Natural killer cell (primary cell): ENCODE measurements at regions of chr5 and their contacts with region 1.

Region 1: DNA sequence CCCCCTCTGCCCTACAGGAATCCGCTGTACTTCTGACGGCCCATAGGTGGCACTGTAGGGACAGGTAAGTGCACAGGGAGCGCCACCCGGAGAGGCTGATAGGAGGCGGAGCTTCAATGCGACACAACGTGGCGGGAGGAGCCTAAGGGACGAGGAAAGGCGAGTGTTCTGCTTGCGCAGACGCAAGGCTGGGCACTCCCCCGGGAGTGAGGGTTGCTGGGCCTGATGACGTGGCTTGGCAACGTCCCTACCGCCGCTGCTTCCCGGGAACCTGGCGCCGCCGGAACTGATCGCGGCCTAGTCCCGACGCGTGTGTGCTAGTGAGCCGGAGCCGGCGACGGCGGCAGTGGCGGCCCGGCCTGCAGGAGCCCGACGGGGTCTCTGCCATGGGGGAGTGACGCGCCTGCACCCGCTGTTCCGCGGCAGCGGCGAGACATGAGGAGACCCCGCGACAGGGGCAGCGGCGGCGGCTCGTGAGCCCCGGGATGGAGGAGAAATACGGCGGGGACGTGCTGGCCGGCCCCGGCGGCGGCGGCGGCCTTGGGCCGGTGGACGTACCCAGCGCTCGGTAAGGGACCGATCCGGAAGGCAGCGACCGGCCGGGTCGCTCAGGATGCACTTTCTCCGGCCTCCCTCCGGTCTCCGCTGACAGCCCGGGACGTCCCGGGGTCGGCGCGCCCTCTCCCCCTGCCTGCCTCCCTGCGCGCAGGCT is at the start of gene SLC30A5:
- DNase-seq: peak; percentile 94 to 100
- ATAC-seq: peak; percentile 97 to 100 (median 98)
- H3K4me3 ChIP-seq: peak within 1 kb of the TSS; percentile 48
- H3K4me3 Mint-ChIP-seq: peak within 1 kb of the TSS; percentile 95
- H3K27ac ChIP-seq: peak within 1 kb of the TSS; percentile 79
- H3K27ac Mint-ChIP-seq: peak within 1 kb of the TSS; percentile 94 to 99
- H3K4me1 ChIP-seq: peaks cover 15% of the 10 kb centered on the region
- H3K4me1 Mint-ChIP-seq: peaks cover 17 to 30% of the 10 kb centered on the region in 2 donors
- H3K27me3 ChIP-seq: no peaks in the 10 kb centered on the region
- H3K27me3 Mint-ChIP-seq: no peaks in the 10 kb centered on the region
- CTCF ChIP-seq: peak; percentile 79
- total RNA-seq, gene SLC30A5: 17.8 to 30.1 (median 26.7) TPM

Region 2: GRCh38 chr5:69166686-69167492 is 73.0 kb after region 1 on chr5 and contains the start of gene CCNB1:
- intact Hi-C with region 1: loop called (anchors 2 kb)
- DNase-seq: peak; percentile 96 to 98
- ATAC-seq: peak; percentile 99 to 100 (median 100)
- H3K4me3 ChIP-seq: peak within 1 kb of the TSS; percentile 68
- H3K4me3 Mint-ChIP-seq: peak within 1 kb of the TSS; percentile 93
- H3K27ac ChIP-seq: peak within 1 kb of the TSS; percentile 56
- H3K27ac Mint-ChIP-seq: peak within 1 kb of the TSS; percentile 90 to 93
- H3K4me1 ChIP-seq: peaks cover 16% of the 10 kb centered on the region
- H3K4me1 Mint-ChIP-seq: peaks cover 24% of the 10 kb centered on the region in 2 donors
- H3K27me3 ChIP-seq: no peaks in the 10 kb centered on the region
- H3K27me3 Mint-ChIP-seq: no peaks in the 10 kb centered on the region
- CTCF ChIP-seq: no peak
- total RNA-seq, gene CCNB1: 2.8 to 5.2 (median 4.0) TPM

Region 3: GRCh38 chr5:69189162-69190086 is 95.5 kb after region 1 on chr5 and contains the start of gene CENPH:
- intact Hi-C with region 1: loop called (anchors 1 kb)
- DNase-seq: peak; percentile 85 to 94
- ATAC-seq: peak; percentile 95 to 98 (median 97)
- H3K4me3 ChIP-seq: peak within 1 kb of the TSS; percentile 72
- H3K4me3 Mint-ChIP-seq: peak within 1 kb of the TSS; percentile 89
- H3K27ac ChIP-seq: peak within 1 kb of the TSS; percentile 65
- H3K27ac Mint-ChIP-seq: peak within 1 kb of the TSS; percentile 86 to 94
- H3K4me1 ChIP-seq: peaks cover 13% of the 10 kb centered on the region
- H3K4me1 Mint-ChIP-seq: peaks cover 10 to 14% of the 10 kb centered on the region in 2 donors
- H3K27me3 ChIP-seq: no peaks in the 10 kb centered on the region
- H3K27me3 Mint-ChIP-seq: no peaks in the 10 kb centered on the region
- CTCF ChIP-seq: no peak
- total RNA-seq, gene CENPH: 5.6 to 6.4 (median 5.6) TPM

Region 4: DNA sequence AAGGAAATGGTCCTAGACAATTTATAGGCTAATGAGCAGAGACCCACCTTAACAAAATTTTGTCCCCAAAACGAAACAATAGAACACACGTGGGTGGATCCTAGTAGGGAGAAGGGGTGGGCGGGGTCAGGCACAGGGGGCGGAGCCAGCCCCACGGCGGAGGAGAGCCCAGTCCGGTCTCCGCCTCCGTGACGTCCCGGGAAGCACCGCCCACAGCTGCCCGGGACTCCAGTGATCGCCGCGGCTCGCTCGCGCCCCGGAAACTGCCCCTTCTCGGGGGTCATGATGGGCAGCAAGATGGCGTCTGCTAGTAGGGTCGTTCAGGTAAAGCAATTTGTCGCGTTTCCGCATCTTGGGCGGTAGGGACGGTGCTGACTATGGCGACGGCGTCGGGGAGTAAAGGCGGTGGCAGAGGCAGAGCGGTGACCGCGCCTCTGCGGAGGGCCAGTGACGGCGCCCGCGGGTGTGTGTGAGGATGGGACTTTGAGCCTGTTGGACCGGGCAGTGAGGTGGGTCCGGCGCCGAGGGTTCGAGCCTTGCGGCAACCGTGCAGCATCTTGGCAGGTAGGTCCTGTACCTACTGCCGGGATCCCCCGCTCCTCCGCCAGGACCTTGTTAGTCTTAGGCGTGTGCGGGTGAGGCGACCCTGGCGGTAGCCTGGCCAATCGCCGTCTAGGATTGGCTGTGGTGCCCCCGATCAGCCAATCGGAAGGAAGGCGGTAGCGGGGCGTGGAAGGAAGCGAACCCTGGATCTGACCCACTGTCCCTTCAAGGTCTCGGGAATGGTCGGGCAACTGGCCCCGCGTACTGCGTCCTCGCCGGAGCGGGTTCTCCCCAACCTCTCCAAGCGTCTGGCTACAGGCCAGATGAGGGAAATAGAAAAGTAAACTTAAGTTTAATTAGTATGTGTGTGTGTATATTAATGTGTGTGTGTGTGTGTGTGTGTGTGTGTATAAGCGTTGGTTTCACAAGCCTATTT is 123.9 kb after region 1 on chr5:
- intact Hi-C with region 1: loop called (anchors 1 kb)
- DNase-seq: peak; percentile 92 to 97
- ATAC-seq: peak; percentile 91 to 99 (median 92)
- H3K4me3 ChIP-seq: peak overlapping the region; percentile 87
- H3K4me3 Mint-ChIP-seq: peak overlapping the region; percentile 100
- H3K27ac ChIP-seq: peak overlapping the region; percentile 83
- H3K27ac Mint-ChIP-seq: peak overlapping the region; percentile 98 to 99
- H3K4me1 ChIP-seq: peaks cover 4% of the 10 kb centered on the region
- H3K4me1 Mint-ChIP-seq: peaks cover 13 to 23% of the 10 kb centered on the region in 2 donors
- H3K27me3 ChIP-seq: no peaks in the 10 kb centered on the region
- H3K27me3 Mint-ChIP-seq: no peaks in the 10 kb centered on the region
- CTCF ChIP-seq: no peak

Region 5: DNA sequence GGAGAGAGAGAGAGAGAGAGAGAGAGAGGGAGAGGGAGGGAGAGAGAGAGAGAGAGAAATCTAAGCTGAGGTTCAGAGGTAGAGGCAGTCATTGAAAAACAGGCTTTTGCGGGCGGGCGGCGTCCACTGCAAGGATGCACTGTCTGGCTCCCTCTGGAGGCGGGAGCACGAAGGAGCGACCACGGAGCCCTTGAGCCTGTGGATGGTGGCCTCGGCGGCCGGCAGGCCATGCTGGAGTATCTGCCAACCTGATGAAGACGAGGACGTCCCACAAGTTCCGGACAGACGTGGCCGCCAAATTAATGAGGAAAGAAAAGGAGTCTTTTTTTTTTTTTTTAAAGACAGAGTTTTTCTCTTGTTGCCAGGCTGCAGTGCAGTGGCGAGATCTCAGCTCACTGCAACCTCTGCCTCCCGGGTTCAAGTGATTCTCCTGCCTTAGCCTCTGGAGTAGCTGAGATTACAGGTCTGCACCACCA is 240.9 kb after region 1 on chr5:
- intact Hi-C with region 1: loop called (anchors 1 kb)
- DNase-seq: peak; percentile 48 to 86
- ATAC-seq: peak; percentile 73 to 81 (median 74)
- H3K4me3 ChIP-seq: no peak overlapping the region
- H3K4me3 Mint-ChIP-seq: peak overlapping the region; percentile 80
- H3K27ac ChIP-seq: no peak overlapping the region
- H3K27ac Mint-ChIP-seq: peak overlapping the region; percentile 53 to 62
- H3K4me1 ChIP-seq: peaks cover 12% of the 10 kb centered on the region
- H3K4me1 Mint-ChIP-seq: peaks cover 10 to 19% of the 10 kb centered on the region in 2 donors
- H3K27me3 ChIP-seq: no peaks in the 10 kb centered on the region
- H3K27me3 Mint-ChIP-seq: no peaks in the 10 kb centered on the region
- CTCF ChIP-seq: peak; percentile 42